ENCODE measurements at regions of chr3 and their contacts with region 1.

Region 1: GRCh38 chr3:136042608-136043221 is 77.2 kb downstream of the PPP2R3A start:
- DNase-seq: peak; percentile 34
- H3K4me3 Mint-ChIP-seq: no peak overlapping the region
- H3K27ac Mint-ChIP-seq: no peak overlapping the region
- H3K4me1 Mint-ChIP-seq: peaks cover 13% of the 10 kb centered on the region
- H3K27me3 Mint-ChIP-seq: no peaks in the 10 kb centered on the region
- CTCF ChIP-seq: peak; percentile 55

Region 2: DNA sequence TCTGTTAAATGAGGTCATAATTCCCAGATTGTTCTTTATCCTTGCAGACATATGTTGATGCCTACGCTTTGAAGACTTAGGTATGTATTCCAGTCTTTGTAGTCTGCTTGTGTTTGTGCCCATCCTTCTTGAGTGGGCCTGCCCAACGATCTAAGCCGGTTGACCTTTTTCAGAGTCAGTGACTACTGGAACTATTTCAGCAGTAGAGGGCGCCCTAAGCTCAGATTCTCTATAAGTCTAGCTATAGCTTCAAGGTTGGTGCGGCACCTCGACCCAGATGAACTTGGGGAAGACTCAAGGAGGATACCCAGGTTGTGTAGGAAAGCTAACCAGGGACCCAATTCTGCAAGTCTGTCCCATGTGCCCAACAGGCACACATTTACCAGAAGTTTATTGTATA is 306.0 kb before region 1 on chr3:
- CTCF ChIA-PET with region 1: interaction called, 25 read pairs
- intact Hi-C with region 1: loop called (anchors 1 kb)
- DNase-seq: peak; percentile 80
- H3K4me3 Mint-ChIP-seq: no peak overlapping the region
- H3K27ac Mint-ChIP-seq: no peak overlapping the region
- H3K4me1 Mint-ChIP-seq: no peaks in the 10 kb centered on the region
- H3K27me3 Mint-ChIP-seq: peaks cover 76% of the 10 kb centered on the region
- CTCF ChIP-seq: peak; percentile 86

Region 3: DNA sequence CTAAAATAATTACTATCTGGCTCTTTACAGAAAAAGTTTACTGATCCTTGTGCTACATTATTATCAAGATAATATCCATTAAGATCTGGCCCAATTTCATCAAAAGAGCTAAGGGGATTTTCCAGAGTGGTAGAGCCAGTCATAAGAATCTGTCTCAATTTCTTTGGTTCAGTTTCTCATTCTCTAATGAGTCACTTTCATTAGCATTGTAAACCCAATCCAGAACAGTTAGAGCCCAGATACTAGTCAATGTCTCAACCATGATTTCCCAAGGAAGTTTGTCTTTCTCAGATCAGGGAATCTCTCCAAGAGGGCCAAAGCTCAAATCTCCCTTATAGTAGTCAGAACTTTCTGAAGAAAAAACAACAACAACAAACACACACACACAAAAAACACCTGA is 208.2 kb before region 1 on chr3:
- CTCF ChIA-PET with region 1: no interaction called
- intact Hi-C with region 1: no loop called
- DNase-seq: no peak
- H3K4me3 Mint-ChIP-seq: no peak overlapping the region
- H3K27ac Mint-ChIP-seq: no peak overlapping the region
- H3K4me1 Mint-ChIP-seq: no peaks in the 10 kb centered on the region
- H3K27me3 Mint-ChIP-seq: peaks cover 65% of the 10 kb centered on the region
- CTCF ChIP-seq: no peak

Region 4: GRCh38 chr3:135905058-135905724 is 137.5 kb before region 1 on chr3:
- CTCF ChIA-PET with region 1: interaction called, 81 read pairs
- intact Hi-C with region 1: loop called (anchors 1 kb)
- DNase-seq: peak; percentile 40
- H3K4me3 Mint-ChIP-seq: no peak overlapping the region
- H3K27ac Mint-ChIP-seq: no peak overlapping the region
- H3K4me1 Mint-ChIP-seq: peaks cover 45% of the 10 kb centered on the region
- H3K27me3 Mint-ChIP-seq: no peaks in the 10 kb centered on the region
- CTCF ChIP-seq: peak; percentile 26

Region 5: DNA sequence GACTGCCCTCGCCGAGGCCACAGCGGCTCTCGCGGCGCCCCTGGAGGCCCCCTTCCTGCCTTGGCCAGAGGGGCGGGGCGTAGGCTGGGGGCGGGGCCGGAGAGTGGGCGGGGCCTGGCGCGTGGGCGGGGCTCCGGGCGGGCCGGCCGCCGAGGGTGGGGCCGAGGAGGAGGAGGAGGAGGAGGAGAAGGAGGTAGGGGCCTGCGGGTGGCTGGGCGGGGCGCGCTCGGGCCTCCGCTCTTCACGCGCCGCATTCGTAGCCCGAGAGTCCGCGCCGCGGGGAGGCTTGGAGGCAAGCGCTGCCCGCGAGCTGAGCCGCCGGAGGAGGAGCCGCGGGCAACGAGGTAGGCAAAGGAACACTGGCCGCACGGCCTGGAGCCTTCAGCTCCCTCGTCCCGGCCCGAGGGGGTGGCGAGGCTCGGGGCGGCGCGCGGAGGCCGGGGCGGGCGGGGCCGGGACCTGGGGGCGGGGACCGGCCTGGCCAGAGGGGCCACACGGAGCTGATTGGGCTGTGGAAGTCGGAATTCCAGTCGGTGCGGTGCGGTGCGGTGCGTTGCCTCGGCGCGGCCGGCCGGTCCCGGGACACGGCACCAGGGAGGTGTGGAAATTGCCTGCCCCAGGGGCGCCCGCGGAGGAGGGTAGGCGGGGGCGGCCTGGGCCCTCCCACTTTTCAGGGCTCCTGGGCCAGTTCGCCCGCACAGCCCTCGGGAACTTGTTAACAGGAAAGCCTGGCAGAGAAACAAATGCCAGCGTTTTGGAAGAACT is 77.0 kb before region 1 on chr3 and contains the start of gene PPP2R3A:
- CTCF ChIA-PET with region 1: interaction called, 11 read pairs
- intact Hi-C with region 1: loop called (anchors 2 kb)
- DNase-seq: peak; percentile 96
- H3K4me3 Mint-ChIP-seq: peak within 1 kb of the TSS; percentile 76
- H3K27ac Mint-ChIP-seq: peak within 1 kb of the TSS; percentile 73
- H3K4me1 Mint-ChIP-seq: peaks cover 39% of the 10 kb centered on the region
- H3K27me3 Mint-ChIP-seq: no peaks in the 10 kb centered on the region
- CTCF ChIP-seq: no peak
- total RNA-seq, gene PPP2R3A: 45.6 and 64.8 TPM in 2 replicates